ENCODE measurements at regions of chr4 and their contacts with region 1.

Region 1: GRCh38 chr4:13476915-13477314 is 7.2 kb downstream of the RAB28 start:
- DNase-seq: no peak
- H3K4me3 ChIP-seq: no peak overlapping the region
- H3K27ac ChIP-seq: no peak overlapping the region
- H3K4me1 ChIP-seq: peaks cover 0 to 27% of the 10 kb centered on the region in 2 donors
- H3K27me3 ChIP-seq: no peaks in the 10 kb centered on the region
- CTCF ChIP-seq: no peak
- POLR2A ChIP-seq: no peak

Region 2: GRCh38 chr4:13427599-13428325 is 49.2 kb before region 1 on chr4:
- intact Hi-C with region 1: loop called in 1 of 2 experiments (anchors 10 kb)
- DNase-seq: no peak
- H3K4me3 ChIP-seq: no peak overlapping the region
- H3K27ac ChIP-seq: no peak overlapping the region
- H3K4me1 ChIP-seq: no peaks in the 10 kb centered on the region
- H3K27me3 ChIP-seq: no peaks in the 10 kb centered on the region
- CTCF ChIP-seq: no peak
- POLR2A ChIP-seq: no peak

Measured in adrenal gland (tissue), 19 donors.